A673 (cell line): ENCODE measurements at regions of chr12 and their contacts with region 1.

Region 1: DNA sequence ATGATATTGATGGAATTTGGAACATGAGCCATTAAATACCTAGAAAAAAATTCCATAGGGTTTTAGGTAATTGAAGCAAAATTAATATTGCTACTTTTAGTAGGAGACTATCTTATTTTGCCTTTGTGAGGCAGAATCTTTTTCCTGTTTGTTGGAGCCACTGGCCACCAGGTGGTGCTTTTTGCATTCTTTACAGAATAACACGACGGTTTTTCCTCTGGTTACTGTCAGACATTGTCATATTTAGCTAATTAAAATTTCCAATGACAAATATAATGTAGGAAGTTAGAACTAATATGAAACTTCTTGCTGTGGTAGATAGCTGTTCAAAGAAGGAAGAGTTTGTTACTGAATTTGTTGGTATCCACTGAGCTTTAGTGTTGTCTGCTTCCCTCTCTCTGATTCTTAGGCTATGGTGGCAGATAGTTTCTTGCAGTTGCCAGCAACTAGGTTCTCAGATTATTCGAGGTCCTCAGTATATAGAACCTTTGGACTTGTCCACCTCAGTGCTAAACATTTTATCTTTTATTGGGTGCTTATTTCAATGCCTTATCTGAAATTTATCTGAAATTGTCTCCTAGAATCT is 25.7 kb downstream of the RAB21 start:
- DNase-seq: peak; percentile 77
- H3K4me3 ChIP-seq: no peak overlapping the region
- H3K27ac ChIP-seq: peak overlapping the region; percentile 44
- H3K4me1 ChIP-seq: peaks cover 32% of the 10 kb centered on the region
- H3K27me3 ChIP-seq: no peaks in the 10 kb centered on the region
- CTCF ChIP-seq: peak; percentile 89

Region 2: DNA sequence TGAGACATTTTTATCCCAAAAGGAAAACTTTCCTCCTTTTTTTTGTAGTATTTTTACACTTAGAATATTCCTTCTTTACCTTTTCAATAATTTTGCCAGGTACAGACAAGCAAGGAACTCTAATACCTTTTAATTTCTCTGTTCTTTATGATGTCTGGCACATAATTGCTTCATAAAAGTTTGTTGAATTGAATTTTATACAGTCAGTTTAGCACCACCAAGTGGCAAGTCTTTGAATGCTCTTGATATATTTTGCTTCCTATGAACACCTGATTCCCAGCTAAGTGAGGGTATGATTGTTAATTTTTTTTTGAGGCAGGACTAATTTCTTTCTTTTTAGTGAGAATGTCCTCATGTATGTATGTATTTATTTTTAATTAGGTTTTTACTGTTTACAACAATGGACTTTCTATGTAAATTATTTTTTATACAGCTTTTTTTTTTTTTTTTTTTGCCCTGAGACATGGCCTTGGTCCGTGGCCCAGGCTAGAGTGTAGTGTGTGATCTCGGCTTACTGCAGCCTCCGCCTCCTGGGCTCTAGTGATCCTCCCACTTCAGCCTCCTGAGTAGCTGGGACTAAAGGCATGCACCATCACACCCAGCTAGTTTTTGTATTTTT is 66.1 kb after region 1 on chr12:
- CTCF ChIA-PET with region 1: interaction called, 8 read pairs
- POLR2A ChIA-PET with region 1: no interaction called
- intact Hi-C with region 1: loop called (anchors 1 kb)
- DNase-seq: peak; percentile 71
- H3K4me3 ChIP-seq: no peak overlapping the region
- H3K27ac ChIP-seq: no peak overlapping the region
- H3K4me1 ChIP-seq: peaks cover 51% of the 10 kb centered on the region
- H3K27me3 ChIP-seq: no peaks in the 10 kb centered on the region
- CTCF ChIP-seq: peak; percentile 81

Region 3: DNA sequence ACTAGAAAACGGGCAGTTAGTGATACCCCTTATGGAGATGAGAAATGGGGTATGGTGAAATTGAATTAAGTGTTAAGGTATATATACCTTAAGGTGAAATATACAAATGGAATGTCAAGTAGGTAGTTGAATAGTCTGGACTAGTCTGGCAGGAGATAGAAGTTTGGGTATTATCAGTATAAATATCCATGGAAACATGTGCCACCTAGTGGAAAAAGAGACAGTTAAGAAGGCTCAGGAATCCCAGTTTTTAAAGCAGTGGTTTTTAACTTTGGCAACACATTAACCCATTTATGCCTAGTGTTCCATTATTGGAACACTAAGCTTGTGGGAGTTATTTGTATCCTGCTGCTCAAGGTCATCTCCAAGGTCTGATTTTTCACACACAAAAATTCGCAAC is 119.8 kb after region 1 on chr12:
- CTCF ChIA-PET with region 1: interaction called, 3 read pairs
- POLR2A ChIA-PET with region 1: interaction called, 5 read pairs
- intact Hi-C with region 1: loop called (anchors 1 kb)
- DNase-seq: peak; percentile 65
- H3K4me3 ChIP-seq: peak overlapping the region; percentile 58
- H3K27ac ChIP-seq: peak overlapping the region; percentile 88
- H3K4me1 ChIP-seq: peaks cover 34% of the 10 kb centered on the region
- H3K27me3 ChIP-seq: no peaks in the 10 kb centered on the region
- CTCF ChIP-seq: peak; percentile 68

Region 4: DNA sequence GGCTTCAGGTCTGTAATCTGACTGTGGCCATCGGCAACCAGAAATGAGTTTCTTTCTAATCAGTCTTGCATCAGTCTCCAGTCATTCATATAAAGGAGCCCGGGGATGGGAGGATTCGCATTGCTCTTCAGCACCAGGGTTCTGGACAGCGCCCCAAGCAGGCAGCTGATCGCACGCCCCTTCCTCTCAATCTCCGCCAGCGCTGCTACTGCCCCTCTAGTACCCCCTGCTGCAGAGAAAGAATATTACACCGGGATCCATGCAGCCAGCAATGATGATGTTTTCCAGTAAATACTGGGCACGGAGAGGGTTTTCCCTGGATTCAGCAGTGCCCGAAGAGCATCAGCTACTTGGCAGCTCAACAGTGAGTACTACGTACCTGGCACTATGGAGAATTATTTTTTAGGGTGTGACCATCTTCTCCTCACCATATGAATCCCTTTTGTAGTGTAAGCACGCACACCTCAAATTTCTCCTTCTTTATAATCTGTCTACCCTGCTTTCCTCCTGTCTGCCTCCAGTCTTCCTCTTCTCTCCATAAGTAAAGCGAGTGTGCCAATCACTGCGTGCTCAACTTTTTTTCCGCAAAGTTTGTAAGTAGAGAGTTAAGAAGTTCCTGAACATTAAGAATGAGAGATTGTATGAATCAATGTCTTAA is 158.5 kb after region 1 on chr12 and contains the start of gene TPH2:
- CTCF ChIA-PET with region 1: interaction called, 3 read pairs
- POLR2A ChIA-PET with region 1: no interaction called
- intact Hi-C with region 1: loop called (anchors 1 kb)
- DNase-seq: peak; percentile 94
- H3K4me3 ChIP-seq: peak within 1 kb of the TSS; percentile 34
- H3K27ac ChIP-seq: no peak within 1 kb of the TSS
- H3K4me1 ChIP-seq: peaks cover 20% of the 10 kb centered on the region
- H3K27me3 ChIP-seq: no peaks in the 10 kb centered on the region
- CTCF ChIP-seq: peak; percentile 92
- total RNA-seq, gene TPH2: 0.82 and 0.96 TPM in 2 replicates

Region 5: GRCh38 chr12:72271451-72272090 is 491.2 kb after region 1 on chr12:
- CTCF ChIA-PET with region 1: no interaction called
- POLR2A ChIA-PET with region 1: no interaction called
- intact Hi-C with region 1: loop called (anchors 10 kb)
- DNase-seq: peak; percentile 91
- H3K4me3 ChIP-seq: peak overlapping the region; percentile 80
- H3K27ac ChIP-seq: peak overlapping the region; percentile 87
- H3K4me1 ChIP-seq: peaks cover 35% of the 10 kb centered on the region
- H3K27me3 ChIP-seq: no peaks in the 10 kb centered on the region
- CTCF ChIP-seq: peak; percentile 47